Naive thymus-derived CD8-positive, alpha-beta T cell (primary cell): ENCODE measurements at regions of chr9 and their contacts with region 1.

Region 1: GRCh38 chr9:109119439-109120203 is at the start of gene TMEM245:
- DNase-seq: peak; percentile 86 to 98 (median 94)
- ATAC-seq: peak; percentile 91 to 95
- H3K4me3 Mint-ChIP-seq: peak within 1 kb of the TSS; percentile 87 to 97 (median 94)
- H3K27ac Mint-ChIP-seq: peak within 1 kb of the TSS; percentile 74 to 94 (median 90)
- H3K4me1 Mint-ChIP-seq: peaks cover 17 to 44% (median 42%) of the 10 kb centered on the region in 4 donors
- H3K27me3 Mint-ChIP-seq: no peaks in the 10 kb centered on the region
- polyA plus RNA-seq, gene TMEM245: 16.3 to 29.2 (median 25.3) TPM

Region 2: GRCh38 chr9:108776920-108777645 is 342.5 kb before region 1 on chr9:
- POLR2A ChIA-PET with region 1: no interaction called
- DNase-seq: no peak
- ATAC-seq: no peak
- H3K4me3 Mint-ChIP-seq: no peak overlapping the region
- H3K27ac Mint-ChIP-seq: no peak overlapping the region
- H3K4me1 Mint-ChIP-seq: peaks cover 0 to 3% (median 0%) of the 10 kb centered on the region in 4 donors
- H3K27me3 Mint-ChIP-seq: peaks cover 5 to 67% (median 20%) of the 10 kb centered on the region in 5 donors

Region 3: DNA sequence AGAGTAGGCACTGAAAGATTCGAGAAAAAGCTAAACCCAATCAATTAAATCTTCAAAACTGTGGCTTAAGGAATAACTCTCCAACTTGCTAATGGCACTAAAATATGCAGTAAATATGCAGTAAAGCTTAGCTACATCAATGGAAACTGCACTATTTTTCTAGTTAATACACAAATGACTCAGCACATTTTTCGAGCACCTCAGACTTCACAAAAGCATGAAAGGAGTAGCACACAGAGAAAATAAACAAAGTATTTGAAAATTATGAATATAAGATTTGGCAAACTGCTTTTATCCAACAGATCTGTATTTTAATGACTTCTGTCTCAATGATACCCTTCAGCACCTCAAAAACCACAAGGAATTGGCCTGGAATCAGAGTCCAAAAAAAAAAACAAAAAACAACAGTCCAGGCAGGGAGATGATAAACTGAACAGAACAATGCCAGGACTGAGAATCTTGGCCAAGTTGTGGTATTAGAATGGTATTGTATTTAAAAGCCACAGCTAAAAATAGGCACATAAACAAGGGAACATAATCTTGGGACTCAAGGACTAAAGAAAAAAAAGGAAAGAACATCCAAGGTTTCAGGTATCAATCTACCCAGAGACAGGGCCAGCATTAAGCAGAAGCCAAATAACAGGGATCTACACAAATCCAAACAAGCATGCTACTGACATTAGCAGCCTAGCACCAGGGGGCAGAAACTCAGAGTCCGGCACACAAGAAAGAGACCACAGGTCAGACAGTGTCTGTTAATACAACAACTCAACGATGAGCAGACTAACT is 21.3 kb before region 1 on chr9:
- POLR2A ChIA-PET with region 1: interaction called, 33 read pairs
- DNase-seq: no peak
- ATAC-seq: no peak
- H3K4me3 Mint-ChIP-seq: peak overlapping the region in 8 of 10 donors; percentile 2 to 55 (median 20)
- H3K27ac Mint-ChIP-seq: peak overlapping the region in 9 of 10 donors; percentile 22 to 89 (median 81)
- H3K4me1 Mint-ChIP-seq: peaks cover 41 to 94% (median 90%) of the 10 kb centered on the region in 4 donors
- H3K27me3 Mint-ChIP-seq: no peaks in the 10 kb centered on the region